BJ (cell line): ENCODE measurements at regions of chr19 and their contacts with region 1.

Region 1: GRCh38 chr19:6551607-6552450 is 21.0 kb downstream of the TNFSF9 start:
- DNase-seq: no peak
- H3K4me3 ChIP-seq: no peak overlapping the region
- H3K27me3 ChIP-seq: no peaks in the 10 kb centered on the region
- CTCF ChIP-seq: no peak

Region 2: DNA sequence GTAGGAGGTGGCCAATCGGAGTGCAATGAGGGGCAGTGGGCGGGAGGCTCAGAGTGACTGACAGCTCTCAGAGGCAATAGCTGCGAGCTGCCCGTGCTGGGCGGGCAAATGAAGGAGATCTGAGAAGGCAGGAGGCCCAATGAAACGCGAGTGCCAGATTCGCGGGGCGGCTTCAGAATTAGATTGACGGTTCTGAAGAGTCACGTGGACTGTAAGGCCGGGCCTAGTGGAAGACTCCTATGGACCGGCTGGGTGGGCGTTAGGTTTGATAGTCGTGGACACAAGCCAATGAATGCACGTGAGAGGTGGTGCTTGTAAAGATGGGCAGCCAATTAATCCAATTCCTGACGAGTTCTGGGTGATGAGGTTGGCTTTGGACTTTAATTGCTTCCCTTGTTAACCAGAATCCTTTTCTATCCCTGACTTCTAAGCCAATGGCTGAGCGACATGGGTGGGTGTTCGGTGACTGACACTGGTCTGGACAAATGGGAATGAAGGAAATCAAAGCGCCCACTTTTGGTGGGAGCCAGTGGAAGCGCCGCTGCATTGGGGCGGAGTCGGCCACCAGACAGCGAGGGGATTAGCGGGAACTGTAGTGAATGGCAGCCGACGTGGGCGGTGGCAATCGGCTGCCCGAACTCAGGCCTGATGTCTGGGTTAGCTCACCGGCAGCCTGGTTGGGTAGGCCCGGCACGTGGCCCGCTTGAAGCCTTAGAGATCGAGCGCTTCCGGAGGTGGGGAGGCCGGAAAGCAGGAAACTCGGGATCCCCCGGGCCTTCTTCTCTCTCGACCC is 126.7 kb before region 1 on chr19:
- CTCF ChIA-PET with region 1: no interaction called
- POLR2A ChIA-PET with region 1: no interaction called
- DNase-seq: peak; percentile 100
- H3K4me3 ChIP-seq: peak overlapping the region; percentile 16; the same call in 1 of the 2 replicates
- H3K27me3 ChIP-seq: no peaks in the 10 kb centered on the region
- CTCF ChIP-seq: no peak

Region 3: DNA sequence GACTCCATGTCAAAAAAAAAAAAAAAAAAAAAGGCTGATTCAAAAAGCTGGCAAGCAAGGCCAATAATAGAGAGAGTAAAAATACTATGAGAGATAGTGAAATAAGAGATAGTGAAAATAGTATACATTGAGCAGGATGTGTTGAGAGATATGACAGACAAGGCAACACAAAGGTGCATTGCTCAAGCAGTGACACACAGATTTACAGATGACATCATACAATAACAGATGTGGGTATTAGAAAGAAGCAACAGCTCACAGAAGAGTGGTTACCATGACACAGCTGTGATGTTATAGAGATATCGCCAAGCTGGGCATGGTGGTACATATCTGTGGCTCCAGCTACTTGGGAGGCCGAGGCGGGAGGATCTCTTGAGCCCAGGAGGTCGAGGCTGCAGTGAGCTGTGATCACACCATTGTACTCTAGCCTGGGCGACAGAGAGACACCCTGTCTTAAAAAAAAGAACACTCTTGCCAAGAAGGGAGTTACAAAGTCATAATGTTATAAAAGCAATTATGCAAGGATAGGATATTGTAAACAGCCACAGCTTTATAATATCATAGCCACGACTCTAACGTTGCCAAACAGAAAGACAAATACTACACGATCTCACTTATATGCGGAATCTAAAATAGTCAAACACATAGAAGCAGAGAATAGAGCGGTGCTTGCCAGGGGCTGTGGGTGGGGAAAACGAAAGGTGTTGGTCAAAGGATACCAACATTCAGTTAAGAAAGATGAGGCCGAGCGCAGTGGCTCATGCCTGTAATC is 10.7 kb before region 1 on chr19:
- CTCF ChIA-PET with region 1: no interaction called
- POLR2A ChIA-PET with region 1: interaction called, 11 read pairs
- DNase-seq: no peak
- H3K4me3 ChIP-seq: no peak overlapping the region
- H3K27me3 ChIP-seq: no peaks in the 10 kb centered on the region
- CTCF ChIP-seq: no peak

Region 4: DNA sequence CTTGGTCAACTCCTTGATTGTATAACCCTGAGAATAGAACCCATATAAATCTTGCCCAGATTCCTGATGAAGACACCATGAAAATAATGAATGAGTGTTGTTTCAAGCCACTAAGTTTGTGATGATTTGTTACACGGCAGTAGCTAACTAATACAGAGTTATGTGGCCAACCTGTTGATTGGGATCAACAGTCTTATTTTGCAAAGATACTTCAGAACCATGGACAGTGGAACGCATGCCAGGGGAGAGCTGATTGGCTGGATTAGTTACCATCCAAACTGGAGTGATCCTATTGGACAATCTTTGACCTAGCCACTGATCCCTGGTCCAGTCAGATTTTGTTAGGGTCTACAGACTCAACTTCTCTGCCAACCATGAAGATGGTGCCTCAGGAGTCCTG is 12.6 kb after region 1 on chr19:
- CTCF ChIA-PET with region 1: no interaction called
- POLR2A ChIA-PET with region 1: no interaction called
- DNase-seq: no peak
- H3K4me3 ChIP-seq: no peak overlapping the region
- H3K27me3 ChIP-seq: no peaks in the 10 kb centered on the region
- CTCF ChIP-seq: no peak

Region 5: DNA sequence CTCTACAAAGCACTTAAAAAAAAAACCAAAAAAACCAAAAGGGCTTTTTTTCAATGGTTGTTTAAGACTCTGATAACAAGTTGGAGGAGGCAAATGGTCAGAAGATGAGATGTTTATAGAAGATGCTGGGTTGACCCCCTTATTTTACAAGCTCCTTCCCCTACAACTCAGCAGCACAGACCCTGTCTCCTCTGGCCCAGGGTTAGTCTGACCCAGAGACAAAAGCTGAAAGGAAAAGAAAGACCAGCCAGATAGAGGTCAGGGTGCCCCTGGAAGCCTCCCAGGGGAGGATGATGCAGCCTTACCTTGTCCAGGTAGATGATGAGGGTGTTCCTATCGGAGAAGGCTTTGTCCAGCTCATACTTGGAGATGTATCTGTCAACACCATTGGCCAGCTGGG is 129.8 kb after region 1 on chr19:
- CTCF ChIA-PET with region 1: no interaction called
- POLR2A ChIA-PET with region 1: interaction called, 14 read pairs
- DNase-seq: no peak
- H3K4me3 ChIP-seq: no peak overlapping the region
- H3K27me3 ChIP-seq: no peaks in the 10 kb centered on the region
- CTCF ChIP-seq: no peak